ENCODE measurements at regions of chr1 and their contacts with region 1.

Region 1: GRCh38 chr1:109090196-109091077 is at the start of gene TMEM167B:
- DNase-seq: peak; percentile 91
- H3K4me3 Mint-ChIP-seq: peak within 1 kb of the TSS; percentile 80
- H3K27ac Mint-ChIP-seq: peak within 1 kb of the TSS; percentile 96
- H3K4me1 Mint-ChIP-seq: peaks cover 12% of the 10 kb centered on the region
- H3K27me3 Mint-ChIP-seq: no peaks in the 10 kb centered on the region
- CTCF ChIP-seq: no peak
- total RNA-seq, gene TMEM167B: 30.2 and 34.3 TPM in 2 replicates

Region 2: DNA sequence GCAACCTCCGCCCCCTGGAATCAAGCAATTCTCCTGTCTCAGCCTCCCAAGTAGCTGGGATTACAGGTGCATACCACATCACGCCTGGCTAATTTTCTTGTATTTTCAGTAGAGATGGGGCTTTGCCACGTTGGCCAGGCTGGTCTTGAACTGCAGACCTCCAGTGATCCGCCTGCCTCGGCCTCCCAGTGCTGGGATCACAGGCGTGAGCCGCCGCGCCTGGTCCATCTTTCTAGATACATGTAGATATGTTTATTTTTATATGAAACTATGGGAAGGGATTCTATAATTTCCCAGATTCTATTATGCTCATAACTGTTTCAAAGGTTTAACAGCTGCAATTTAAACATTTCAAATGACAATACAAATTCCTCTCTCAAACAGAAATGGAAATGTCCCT is 154.3 kb before region 1 on chr1:
- CTCF ChIA-PET with region 1: no interaction called
- POLR2A ChIA-PET with region 1: no interaction called
- intact Hi-C with region 1: no loop called
- DNase-seq: no peak
- H3K4me3 Mint-ChIP-seq: no peak overlapping the region
- H3K27ac Mint-ChIP-seq: peak overlapping the region; percentile 28
- H3K4me1 Mint-ChIP-seq: no peaks in the 10 kb centered on the region
- H3K27me3 Mint-ChIP-seq: no peaks in the 10 kb centered on the region
- CTCF ChIP-seq: no peak

Region 3: GRCh38 chr1:108963052-108963686 is 127.3 kb before region 1 on chr1 and contains the start of gene CLCC1:
- CTCF ChIA-PET with region 1: interaction called, 3 read pairs
- POLR2A ChIA-PET with region 1: interaction called, 18 read pairs
- intact Hi-C with region 1: no loop called
- DNase-seq: peak; percentile 94
- H3K4me3 Mint-ChIP-seq: peak within 1 kb of the TSS; percentile 86
- H3K27ac Mint-ChIP-seq: peak within 1 kb of the TSS; percentile 83
- H3K4me1 Mint-ChIP-seq: peaks cover 18% of the 10 kb centered on the region
- H3K27me3 Mint-ChIP-seq: no peaks in the 10 kb centered on the region
- CTCF ChIP-seq: no peak
- total RNA-seq, gene CLCC1: 36.6 and 46.3 TPM in 2 replicates

Region 4: GRCh38 chr1:109011335-109011734 is 79.1 kb before region 1 on chr1:
- CTCF ChIA-PET with region 1: no interaction called
- POLR2A ChIA-PET with region 1: no interaction called
- intact Hi-C with region 1: no loop called
- DNase-seq: no peak
- H3K4me3 Mint-ChIP-seq: no peak overlapping the region
- H3K27ac Mint-ChIP-seq: no peak overlapping the region
- H3K4me1 Mint-ChIP-seq: no peaks in the 10 kb centered on the region
- H3K27me3 Mint-ChIP-seq: no peaks in the 10 kb centered on the region
- CTCF ChIP-seq: no peak

Region 5: GRCh38 chr1:109027841-109028240 is 62.6 kb before region 1 on chr1:
- CTCF ChIA-PET with region 1: interaction called, 3 read pairs
- POLR2A ChIA-PET with region 1: interaction called, 12 read pairs
- intact Hi-C with region 1: no loop called
- DNase-seq: no peak
- H3K4me3 Mint-ChIP-seq: no peak overlapping the region
- H3K27ac Mint-ChIP-seq: no peak overlapping the region
- H3K4me1 Mint-ChIP-seq: no peaks in the 10 kb centered on the region
- H3K27me3 Mint-ChIP-seq: no peaks in the 10 kb centered on the region
- CTCF ChIP-seq: peak; percentile 7

Region 6: DNA sequence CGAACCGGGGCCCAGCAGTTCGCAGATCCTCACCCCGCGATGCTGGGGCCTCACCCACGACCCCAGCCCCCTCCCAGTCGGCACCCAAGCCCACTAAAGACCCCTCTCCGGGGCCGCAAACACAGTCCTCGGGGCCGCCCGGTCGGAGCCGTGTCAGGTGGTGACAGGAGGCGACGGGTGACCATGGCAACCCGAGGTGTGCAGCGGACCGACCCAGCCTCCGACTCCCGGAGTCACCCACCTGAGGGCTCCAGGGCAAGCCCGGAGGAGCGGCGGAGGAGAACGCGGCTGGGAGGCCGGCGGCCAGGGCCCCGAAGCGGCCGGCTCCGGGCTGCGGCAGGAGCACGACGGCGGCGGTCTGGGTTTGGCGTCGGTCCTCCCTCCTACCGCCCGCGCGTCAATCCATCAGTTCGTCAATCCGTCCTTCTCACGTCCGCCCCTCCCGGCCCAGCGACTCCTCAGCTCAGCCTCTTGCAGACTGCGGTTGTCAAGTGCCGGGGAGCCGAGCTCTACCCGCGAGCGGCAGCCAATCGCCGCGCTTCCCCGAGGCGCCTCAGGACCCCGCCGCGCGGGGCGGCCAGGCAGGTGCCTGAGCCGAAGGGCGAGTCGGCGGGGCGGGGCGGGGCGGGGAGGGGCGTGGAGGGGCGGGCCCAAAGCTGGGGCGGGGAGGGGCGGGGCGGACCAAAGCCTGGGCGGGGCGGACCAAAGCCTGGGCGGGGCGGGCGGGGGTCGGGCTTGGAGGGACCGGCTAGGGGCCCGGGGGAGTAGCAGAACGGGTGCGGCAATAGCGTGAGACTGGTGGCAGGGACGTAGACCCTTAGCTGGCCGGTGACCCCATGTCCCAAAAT is 48.6 kb before region 1 on chr1 and contains the start of gene WDR47:
- CTCF ChIA-PET with region 1: interaction called, 11 read pairs
- POLR2A ChIA-PET with region 1: interaction called, 54 read pairs
- intact Hi-C with region 1: no loop called
- DNase-seq: peak; percentile 96
- H3K4me3 Mint-ChIP-seq: peak within 1 kb of the TSS; percentile 94
- H3K27ac Mint-ChIP-seq: peak within 1 kb of the TSS; percentile 78
- H3K4me1 Mint-ChIP-seq: peaks cover 6% of the 10 kb centered on the region
- H3K27me3 Mint-ChIP-seq: no peaks in the 10 kb centered on the region
- CTCF ChIP-seq: no peak
- total RNA-seq, gene WDR47: 16.1 and 17.8 TPM in 2 replicates

Region 7: GRCh38 chr1:109075531-109076490 is 14.6 kb before region 1 on chr1 and contains the start of gene TAF13:
- CTCF ChIA-PET with region 1: interaction called, 5 read pairs
- POLR2A ChIA-PET with region 1: interaction called, 69 read pairs
- intact Hi-C with region 1: loop called (anchors 1 kb)
- DNase-seq: peak; percentile 93
- H3K4me3 Mint-ChIP-seq: peak within 1 kb of the TSS; percentile 99
- H3K27ac Mint-ChIP-seq: peak within 1 kb of the TSS; percentile 100
- H3K4me1 Mint-ChIP-seq: peaks cover 5% of the 10 kb centered on the region
- H3K27me3 Mint-ChIP-seq: no peaks in the 10 kb centered on the region
- CTCF ChIP-seq: no peak
- total RNA-seq, gene TAF13: 76.7 and 88.2 TPM in 2 replicates

Region 8: DNA sequence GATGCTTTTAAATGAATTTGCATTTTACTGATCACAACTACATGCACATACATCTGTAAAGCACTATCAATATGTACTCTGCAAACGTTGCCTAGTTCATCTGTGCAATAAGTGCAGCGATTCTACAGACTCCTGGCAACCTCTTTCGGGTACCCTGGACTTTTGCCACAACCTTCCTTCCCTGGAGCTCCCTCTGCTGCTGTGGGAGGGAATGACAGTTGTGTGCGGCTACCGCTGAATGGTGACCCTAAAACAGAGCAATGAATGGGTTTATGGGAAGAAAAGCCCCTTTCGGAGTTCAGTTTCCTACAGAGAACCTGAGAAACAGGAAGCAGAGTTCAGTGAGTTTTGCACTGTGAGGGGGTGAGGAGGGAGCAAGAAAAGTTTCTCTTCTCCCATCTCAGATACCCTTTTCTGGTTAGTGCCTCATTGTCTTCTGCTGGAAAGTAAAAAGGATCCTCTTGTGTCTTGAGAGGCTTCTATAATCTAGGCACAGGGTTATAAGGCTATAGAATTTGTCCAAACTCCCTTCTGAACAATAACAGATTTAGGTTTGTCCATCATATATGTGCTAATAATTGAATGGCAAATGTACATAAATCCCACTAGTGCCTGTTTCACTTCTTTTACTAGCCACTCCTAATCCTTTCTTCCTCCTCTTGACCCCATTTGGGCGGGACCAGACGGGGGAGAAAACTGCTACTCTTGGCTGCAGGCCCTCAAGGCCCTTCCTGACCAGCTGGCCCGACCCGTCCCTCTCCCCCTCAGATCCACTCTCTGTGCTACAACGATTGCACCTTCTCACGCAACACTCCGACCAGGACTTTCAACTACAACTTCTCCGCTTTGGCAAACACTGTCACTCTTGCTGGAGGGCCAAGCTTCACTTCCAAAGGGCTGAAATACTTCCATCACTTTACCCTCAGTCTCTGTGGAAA is 103.5 kb after region 1 on chr1:
- CTCF ChIA-PET with region 1: no interaction called
- POLR2A ChIA-PET with region 1: interaction called, 18 read pairs
- intact Hi-C with region 1: no loop called
- DNase-seq: peak; percentile 58
- H3K4me3 Mint-ChIP-seq: no peak overlapping the region
- H3K27ac Mint-ChIP-seq: no peak overlapping the region
- H3K4me1 Mint-ChIP-seq: peaks cover 24% of the 10 kb centered on the region
- H3K27me3 Mint-ChIP-seq: no peaks in the 10 kb centered on the region
- CTCF ChIP-seq: peak; percentile 59